Common myeloid progenitor, CD34-positive (primary cell): ENCODE measurements at regions of chr12 and their contacts with region 1.

Region 1: DNA sequence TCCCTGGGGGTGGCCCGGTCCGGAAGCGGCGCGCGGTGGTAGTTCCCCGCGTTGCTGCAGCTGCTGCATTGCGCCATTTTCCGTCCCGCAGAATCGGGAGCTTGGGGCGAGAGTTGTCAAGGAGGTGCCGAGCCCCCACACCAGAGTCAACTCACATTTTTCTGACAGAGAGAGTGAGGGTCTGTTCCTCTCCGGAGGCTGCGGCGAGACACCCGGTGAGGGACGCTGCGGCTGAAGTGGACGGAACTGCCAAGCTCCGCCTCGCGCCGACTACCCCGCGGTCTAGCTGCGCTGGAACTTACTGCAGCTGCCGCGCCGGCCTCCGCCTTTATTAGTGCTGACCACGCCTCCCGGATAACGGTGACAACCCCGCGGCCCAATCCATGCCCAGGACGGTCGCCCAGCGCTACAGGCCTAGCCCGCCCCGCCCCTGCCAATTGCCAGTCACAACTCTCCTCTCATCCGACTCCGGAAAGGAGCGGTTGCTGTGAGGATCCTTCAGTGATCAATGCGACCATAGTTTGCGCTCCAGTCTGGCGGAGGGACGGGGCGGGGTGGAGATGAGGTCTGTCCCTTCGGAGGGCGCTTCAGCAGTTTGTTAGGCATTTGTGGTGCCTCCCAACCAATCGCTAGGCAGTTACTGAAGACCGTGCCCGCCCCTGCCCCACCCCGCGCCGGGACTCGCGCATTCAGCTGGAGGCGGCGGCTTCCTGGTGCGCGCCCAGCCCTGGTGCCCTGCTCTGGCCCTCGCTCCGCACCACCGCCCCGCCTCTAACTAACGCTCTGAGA is at the start of gene VAMP1:
- DNase-seq: peak; percentile 95 to 97 (median 97)
- H3K4me3 ChIP-seq: peak within 1 kb of the TSS; percentile 66 to 90 (median 80)
- H3K27ac ChIP-seq: peak within 1 kb of the TSS in 1 of 2 experiments; percentile 71
- H3K4me1 ChIP-seq: peaks cover 4 to 24% (median 21%) of the 10 kb centered on the region in 4 experiments
- H3K27me3 ChIP-seq: no peaks in the 10 kb centered on the region

Region 2: GRCh38 chr12:6084261-6084968 is 386.2 kb before region 1 on chr12:
- CTCF ChIA-PET with region 1: no interaction called
- POLR2A ChIA-PET with region 1: no interaction called
- DNase-seq: no peak
- H3K4me3 ChIP-seq: no peak overlapping the region
- H3K27ac ChIP-seq: no peak overlapping the region
- H3K4me1 ChIP-seq: peaks cover 0 to 23% (median 11%) of the 10 kb centered on the region in 4 experiments
- H3K27me3 ChIP-seq: no peaks in the 10 kb centered on the region

Region 3: GRCh38 chr12:6335451-6336078 is 135.0 kb before region 1 on chr12:
- CTCF ChIA-PET with region 1: interaction called, 24 read pairs
- POLR2A ChIA-PET with region 1: interaction called, 6 read pairs
- DNase-seq: peak; percentile 87 to 96 (median 94)
- H3K4me3 ChIP-seq: peak overlapping the region in 6 of 7 experiments; percentile 65 to 99 (median 98)
- H3K27ac ChIP-seq: peak overlapping the region; percentile 74 to 96
- H3K4me1 ChIP-seq: peaks cover 30 to 81% (median 78%) of the 10 kb centered on the region in 4 experiments
- H3K27me3 ChIP-seq: no peaks in the 10 kb centered on the region

Region 4: DNA sequence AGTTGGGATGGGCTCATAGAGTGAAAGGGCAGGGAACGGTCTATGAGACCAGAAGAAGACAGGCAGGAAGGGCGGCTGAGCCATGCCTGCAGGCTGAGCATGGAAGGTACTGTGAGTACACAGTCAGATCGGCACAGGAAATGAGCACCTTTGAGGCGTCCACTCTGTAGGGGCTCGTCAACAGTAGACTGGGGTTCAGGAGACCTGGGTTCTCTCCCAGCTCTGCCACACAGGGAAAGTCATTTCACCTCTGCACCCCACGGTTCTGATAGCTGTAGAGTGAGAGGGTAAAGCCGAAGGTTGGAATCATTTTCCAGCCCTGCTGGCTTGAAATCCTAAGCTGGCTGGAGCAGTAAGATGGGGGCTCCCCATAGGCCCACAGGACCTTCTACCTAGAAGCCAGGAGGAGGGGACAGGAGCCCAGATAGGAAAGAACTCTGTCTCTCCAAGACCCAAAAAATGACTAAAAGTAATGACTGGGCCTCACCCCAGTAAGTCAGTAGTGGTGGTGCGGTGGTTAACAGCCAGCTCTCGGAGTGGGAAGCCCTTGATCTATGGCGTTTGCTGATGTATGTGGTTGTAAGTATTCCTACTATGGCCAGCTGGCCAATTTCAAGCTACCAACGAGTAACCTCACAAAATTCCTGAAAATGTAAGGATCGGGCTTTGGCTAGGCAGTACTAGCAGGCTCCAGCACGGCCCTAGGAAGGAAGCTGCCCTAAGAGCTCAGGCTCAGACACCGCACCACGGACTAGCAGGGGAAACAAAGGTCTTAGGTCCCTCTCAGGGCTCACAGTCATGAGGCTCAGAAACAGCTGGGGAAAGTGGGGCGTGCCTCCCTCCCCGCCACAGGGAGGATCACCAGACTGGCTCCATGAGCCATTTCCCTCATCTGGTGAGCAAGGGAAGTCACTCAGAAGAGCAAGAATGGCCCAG is 36.1 kb before region 1 on chr12:
- CTCF ChIA-PET with region 1: interaction called, 197 read pairs
- POLR2A ChIA-PET with region 1: no interaction called
- DNase-seq: no peak
- H3K4me3 ChIP-seq: no peak overlapping the region
- H3K27ac ChIP-seq: no peak overlapping the region
- H3K4me1 ChIP-seq: peaks cover 8 to 28% (median 18%) of the 10 kb centered on the region in 4 experiments
- H3K27me3 ChIP-seq: no peaks in the 10 kb centered on the region

Region 5: DNA sequence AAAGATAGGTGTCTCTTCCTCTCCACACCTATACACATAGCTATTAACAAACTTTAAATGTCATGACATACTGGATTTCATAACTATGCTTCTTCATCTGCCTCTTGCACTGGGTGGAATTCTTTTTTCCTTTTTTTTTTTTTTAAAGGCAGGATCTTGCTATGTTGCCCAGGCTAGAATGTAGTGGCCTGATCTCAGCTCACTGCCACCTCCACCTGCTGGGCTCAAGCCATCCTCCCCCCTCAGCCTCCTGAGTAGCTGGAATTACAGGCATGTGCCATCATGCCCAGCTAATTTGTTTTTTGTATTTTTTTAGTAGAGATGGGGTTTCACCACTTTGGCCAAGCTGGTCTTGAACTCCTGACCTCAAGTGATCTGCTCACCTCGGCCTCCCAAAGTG is 17.7 kb after region 1 on chr12:
- CTCF ChIA-PET with region 1: interaction called, 12 read pairs
- POLR2A ChIA-PET with region 1: interaction called, 15 read pairs
- DNase-seq: no peak
- H3K4me3 ChIP-seq: no peak overlapping the region
- H3K27ac ChIP-seq: no peak overlapping the region
- H3K4me1 ChIP-seq: peaks cover 8 to 12% (median 10%) of the 10 kb centered on the region in 4 experiments
- H3K27me3 ChIP-seq: no peaks in the 10 kb centered on the region

Region 6: DNA sequence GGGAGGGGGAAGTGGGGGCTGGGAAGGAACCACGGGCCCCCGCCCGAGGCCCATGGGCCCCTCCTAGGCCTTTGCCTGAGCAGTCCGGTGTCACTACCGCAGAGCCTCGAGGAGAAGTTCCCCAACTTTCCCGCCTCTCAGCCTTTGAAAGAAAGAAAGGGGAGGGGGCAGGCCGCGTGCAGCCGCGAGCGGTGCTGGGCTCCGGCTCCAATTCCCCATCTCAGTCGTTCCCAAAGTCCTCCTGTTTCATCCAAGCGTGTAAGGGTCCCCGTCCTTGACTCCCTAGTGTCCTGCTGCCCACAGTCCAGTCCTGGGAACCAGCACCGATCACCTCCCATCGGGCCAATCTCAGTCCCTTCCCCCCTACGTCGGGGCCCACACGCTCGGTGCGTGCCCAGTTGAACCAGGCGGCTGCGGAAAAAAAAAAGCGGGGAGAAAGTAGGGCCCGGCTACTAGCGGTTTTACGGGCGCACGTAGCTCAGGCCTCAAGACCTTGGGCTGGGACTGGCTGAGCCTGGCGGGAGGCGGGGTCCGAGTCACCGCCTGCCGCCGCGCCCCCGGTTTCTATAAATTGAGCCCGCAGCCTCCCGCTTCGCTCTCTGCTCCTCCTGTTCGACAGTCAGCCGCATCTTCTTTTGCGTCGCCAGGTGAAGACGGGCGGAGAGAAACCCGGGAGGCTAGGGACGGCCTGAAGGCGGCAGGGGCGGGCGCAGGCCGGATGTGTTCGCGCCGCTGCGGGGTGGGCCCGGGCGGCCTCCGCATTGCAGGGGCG is 63.5 kb after region 1 on chr12 and contains the start of gene GAPDH:
- CTCF ChIA-PET with region 1: interaction called, 12 read pairs
- POLR2A ChIA-PET with region 1: interaction called, 16 read pairs
- DNase-seq: peak; percentile 93 to 97 (median 95)
- H3K4me3 ChIP-seq: peak within 1 kb of the TSS; percentile 83 to 96 (median 89)
- H3K27ac ChIP-seq: peak within 1 kb of the TSS; percentile 89 to 94
- H3K4me1 ChIP-seq: peaks cover 5 to 54% (median 52%) of the 10 kb centered on the region in 4 experiments
- H3K27me3 ChIP-seq: no peaks in the 10 kb centered on the region